CD4-positive, alpha-beta memory T cell (primary cell): ENCODE measurements at regions of chr12 and their contacts with region 1.

Region 1: GRCh38 chr12:4276524-4277204 is 3.1 kb downstream of the CCND2 start:
- DNase-seq: peak; percentile 85 to 92 (median 88)
- H3K4me3 ChIP-seq: peak overlapping the region; percentile 84 to 96
- H3K4me3 Mint-ChIP-seq: peak overlapping the region; percentile 91 to 99 (median 96)
- H3K27ac ChIP-seq: peak overlapping the region; percentile 91
- H3K27ac Mint-ChIP-seq: peak overlapping the region; percentile 91 to 100 (median 98)
- H3K4me1 ChIP-seq: peaks cover 68% of the 10 kb centered on the region
- H3K4me1 Mint-ChIP-seq: peaks cover 34 to 88% (median 59%) of the 10 kb centered on the region in 4 donors
- H3K27me3 ChIP-seq: no peaks in the 10 kb centered on the region
- H3K27me3 Mint-ChIP-seq: no peaks in the 10 kb centered on the region

Region 2: GRCh38 chr12:3885277-3886094 is 391.2 kb before region 1 on chr12:
- CTCF ChIA-PET with region 1: interaction called, 304 read pairs
- POLR2A ChIA-PET with region 1: interaction called, 56 read pairs
- intact Hi-C with region 1: loop called (anchors 1 kb)
- DNase-seq: peak; percentile 55 to 73 (median 70)
- H3K4me3 ChIP-seq: no peak overlapping the region
- H3K4me3 Mint-ChIP-seq: peak overlapping the region in 3 of 8 donors; percentile 19 to 25 (median 22)
- H3K27ac ChIP-seq: no peak overlapping the region
- H3K27ac Mint-ChIP-seq: peak overlapping the region; percentile 2 to 90 (median 53)
- H3K4me1 ChIP-seq: peaks cover 9% of the 10 kb centered on the region
- H3K4me1 Mint-ChIP-seq: peaks cover 12 to 25% (median 13%) of the 10 kb centered on the region in 4 donors
- H3K27me3 ChIP-seq: no peaks in the 10 kb centered on the region
- H3K27me3 Mint-ChIP-seq: peaks cover 5 to 7% of the 10 kb centered on the region in 2 donors

Region 3: GRCh38 chr12:3998968-3999826 is 277.5 kb before region 1 on chr12:
- CTCF ChIA-PET with region 1: interaction called, 217 read pairs
- POLR2A ChIA-PET with region 1: interaction called, 62 read pairs
- intact Hi-C with region 1: loop called (anchors 1 kb)
- DNase-seq: peak; percentile 39 to 60 (median 55)
- H3K4me3 ChIP-seq: no peak overlapping the region
- H3K4me3 Mint-ChIP-seq: peak overlapping the region in 1 of 8 donors; percentile 15
- H3K27ac ChIP-seq: no peak overlapping the region
- H3K27ac Mint-ChIP-seq: peak overlapping the region in 6 of 7 donors; percentile 70 to 87 (median 84)
- H3K4me1 ChIP-seq: peaks cover 9% of the 10 kb centered on the region
- H3K4me1 Mint-ChIP-seq: peaks cover 7 to 30% (median 20%) of the 10 kb centered on the region in 4 donors
- H3K27me3 ChIP-seq: no peaks in the 10 kb centered on the region
- H3K27me3 Mint-ChIP-seq: no peaks in the 10 kb centered on the region

Region 4: DNA sequence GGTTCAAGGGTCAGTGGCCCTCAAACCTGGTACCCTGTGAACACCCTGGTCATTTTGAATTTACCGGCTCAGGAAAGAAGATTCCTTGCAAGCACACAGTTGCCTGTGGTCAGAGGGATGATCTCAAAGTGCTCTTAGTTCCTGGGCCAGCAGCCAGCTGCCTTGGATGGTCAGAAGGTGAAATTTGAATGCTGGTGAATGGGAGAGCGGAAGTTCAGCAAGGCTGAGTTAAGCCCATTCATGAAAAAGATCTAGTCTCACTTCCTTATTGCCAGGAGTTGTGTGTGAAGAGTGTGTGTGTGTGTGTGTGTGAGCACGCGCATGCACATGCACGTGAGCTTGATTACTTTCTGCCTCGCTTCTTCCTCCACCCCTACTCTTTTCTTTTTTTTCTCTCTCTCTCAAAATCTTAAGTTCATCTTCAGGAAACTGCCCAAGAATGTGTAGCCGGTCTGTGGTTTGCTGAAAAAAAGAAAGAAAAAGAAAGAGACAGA is 158.6 kb before region 1 on chr12:
- CTCF ChIA-PET with region 1: interaction called, 77 read pairs
- POLR2A ChIA-PET with region 1: interaction called, 17 read pairs
- intact Hi-C with region 1: no loop called
- DNase-seq: peak in 4 of 5 donors; percentile 34 to 45 (median 40)
- H3K4me3 ChIP-seq: no peak overlapping the region
- H3K4me3 Mint-ChIP-seq: peak overlapping the region; percentile 67 to 86 (median 80)
- H3K27ac ChIP-seq: no peak overlapping the region
- H3K27ac Mint-ChIP-seq: peak overlapping the region; percentile 31 to 92 (median 78)
- H3K4me1 ChIP-seq: peaks cover 50% of the 10 kb centered on the region
- H3K4me1 Mint-ChIP-seq: peaks cover 40 to 57% (median 45%) of the 10 kb centered on the region in 4 donors
- H3K27me3 ChIP-seq: no peaks in the 10 kb centered on the region
- H3K27me3 Mint-ChIP-seq: peaks cover 0 to 6% of the 10 kb centered on the region in 2 donors

Region 5: GRCh38 chr12:4215229-4216186 is 61.2 kb before region 1 on chr12:
- CTCF ChIA-PET with region 1: interaction called, 7 read pairs
- POLR2A ChIA-PET with region 1: interaction called, 10 read pairs
- intact Hi-C with region 1: no loop called
- DNase-seq: peak in 4 of 5 donors; percentile 20 to 30 (median 25)
- H3K4me3 ChIP-seq: no peak overlapping the region
- H3K4me3 Mint-ChIP-seq: peak overlapping the region; percentile 55 to 84 (median 64)
- H3K27ac ChIP-seq: no peak overlapping the region
- H3K27ac Mint-ChIP-seq: peak overlapping the region; percentile 24 to 78 (median 44)
- H3K4me1 ChIP-seq: peaks cover 27% of the 10 kb centered on the region
- H3K4me1 Mint-ChIP-seq: peaks cover 15 to 37% (median 28%) of the 10 kb centered on the region in 4 donors
- H3K27me3 ChIP-seq: no peaks in the 10 kb centered on the region
- H3K27me3 Mint-ChIP-seq: no peaks in the 10 kb centered on the region

Region 6: GRCh38 chr12:4307593-4308333 is 31.1 kb after region 1 on chr12:
- CTCF ChIA-PET with region 1: no interaction called
- POLR2A ChIA-PET with region 1: no interaction called
- intact Hi-C with region 1: no loop called
- DNase-seq: no peak
- H3K4me3 ChIP-seq: no peak overlapping the region
- H3K4me3 Mint-ChIP-seq: no peak overlapping the region
- H3K27ac ChIP-seq: no peak overlapping the region
- H3K27ac Mint-ChIP-seq: peak overlapping the region in 3 of 7 donors; percentile 29 to 79 (median 46)
- H3K4me1 ChIP-seq: no peaks in the 10 kb centered on the region
- H3K4me1 Mint-ChIP-seq: peaks cover 0 to 5% (median 1%) of the 10 kb centered on the region in 4 donors
- H3K27me3 ChIP-seq: no peaks in the 10 kb centered on the region
- H3K27me3 Mint-ChIP-seq: no peaks in the 10 kb centered on the region

Region 7: DNA sequence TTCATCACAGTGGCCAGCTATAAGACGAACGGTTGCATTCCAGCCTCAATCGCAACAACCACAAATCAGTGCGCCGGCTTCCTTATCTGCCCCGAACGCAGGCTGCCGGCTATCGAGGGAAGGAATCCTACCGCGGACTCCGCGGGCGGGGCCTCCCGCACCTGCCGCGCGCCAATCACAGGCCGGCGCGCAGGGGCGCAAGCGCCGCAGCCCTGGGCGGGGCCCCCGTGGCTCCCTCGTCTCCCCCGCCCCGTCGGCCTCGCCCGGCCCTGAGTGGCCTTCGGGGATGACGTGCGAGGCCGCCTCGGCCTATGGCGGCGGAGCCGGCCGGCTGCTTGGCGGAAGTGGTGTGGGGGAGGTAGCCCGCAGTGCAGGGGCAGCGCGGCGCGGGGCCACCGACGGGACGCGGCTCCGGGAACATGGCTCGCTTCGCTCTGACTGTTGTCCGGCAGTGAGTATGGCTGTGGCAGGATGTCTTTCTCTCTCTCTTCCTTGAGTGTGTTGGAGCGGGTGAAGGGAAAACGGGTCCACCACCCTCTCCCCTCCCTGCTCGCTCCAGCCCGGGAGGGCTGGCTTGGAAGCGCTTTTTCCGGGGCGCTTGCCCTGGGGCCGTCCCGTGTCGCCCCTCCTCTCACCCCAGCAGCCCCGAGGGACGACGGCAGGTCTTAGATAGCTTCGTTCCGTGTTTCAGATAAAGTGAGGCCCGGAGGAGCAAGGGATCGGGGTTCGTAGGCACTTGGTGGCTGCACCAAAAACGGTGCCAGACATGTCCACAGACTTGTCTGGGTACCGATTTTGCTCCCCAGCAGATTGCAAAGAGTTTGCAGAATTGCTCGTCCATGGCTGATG is 44.4 kb after region 1 on chr12 and contains the start of gene TIGAR:
- CTCF ChIA-PET with region 1: interaction called, 4 read pairs
- POLR2A ChIA-PET with region 1: interaction called, 6 read pairs
- intact Hi-C with region 1: loop called (anchors 1 kb)
- DNase-seq: peak; percentile 88 to 94 (median 92)
- H3K4me3 ChIP-seq: peak within 1 kb of the TSS; percentile 97
- H3K4me3 Mint-ChIP-seq: peak within 1 kb of the TSS; percentile 83 to 95 (median 93)
- H3K27ac ChIP-seq: peak within 1 kb of the TSS; percentile 81
- H3K27ac Mint-ChIP-seq: peak within 1 kb of the TSS; percentile 93 to 97 (median 96)
- H3K4me1 ChIP-seq: peaks cover 30% of the 10 kb centered on the region
- H3K4me1 Mint-ChIP-seq: peaks cover 24 to 57% (median 37%) of the 10 kb centered on the region in 4 donors
- H3K27me3 ChIP-seq: no peaks in the 10 kb centered on the region
- H3K27me3 Mint-ChIP-seq: no peaks in the 10 kb centered on the region
- total RNA-seq, gene TIGAR: 15.2 to 17.3 TPM